ENCODE measurements at regions of chr4 and their contacts with region 1.

Region 1: DNA sequence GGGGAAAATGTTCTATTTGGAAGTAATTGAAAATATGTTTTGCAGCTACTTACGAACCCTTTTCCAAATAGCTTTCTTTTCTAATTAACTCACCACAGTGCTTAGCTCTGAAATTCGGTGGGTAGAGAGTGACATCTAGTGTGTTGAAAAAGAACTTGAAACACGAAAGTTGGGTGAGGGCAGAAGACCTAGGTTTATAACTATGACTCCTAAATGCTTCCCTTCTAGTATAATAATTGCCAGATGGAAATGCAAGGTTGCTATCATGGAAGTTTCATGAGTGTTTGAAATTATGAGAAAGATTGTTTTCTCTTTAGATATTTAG is 77.3 kb upstream of the NOCT start:
- DNase-seq: peak in 1 of 2 experiments; percentile 44
- H3K4me3 ChIP-seq: no peak overlapping the region
- H3K4me3 Mint-ChIP-seq: no peak overlapping the region
- H3K27ac Mint-ChIP-seq: peak overlapping the region; percentile 32
- H3K4me1 ChIP-seq: peaks cover 56% of the 10 kb centered on the region
- H3K4me1 Mint-ChIP-seq: peaks cover 37% of the 10 kb centered on the region
- H3K27me3 ChIP-seq: no peaks in the 10 kb centered on the region
- H3K27me3 Mint-ChIP-seq: no peaks in the 10 kb centered on the region
- CTCF ChIP-seq: peak in 1 of 2 experiments; percentile 50

Region 2: DNA sequence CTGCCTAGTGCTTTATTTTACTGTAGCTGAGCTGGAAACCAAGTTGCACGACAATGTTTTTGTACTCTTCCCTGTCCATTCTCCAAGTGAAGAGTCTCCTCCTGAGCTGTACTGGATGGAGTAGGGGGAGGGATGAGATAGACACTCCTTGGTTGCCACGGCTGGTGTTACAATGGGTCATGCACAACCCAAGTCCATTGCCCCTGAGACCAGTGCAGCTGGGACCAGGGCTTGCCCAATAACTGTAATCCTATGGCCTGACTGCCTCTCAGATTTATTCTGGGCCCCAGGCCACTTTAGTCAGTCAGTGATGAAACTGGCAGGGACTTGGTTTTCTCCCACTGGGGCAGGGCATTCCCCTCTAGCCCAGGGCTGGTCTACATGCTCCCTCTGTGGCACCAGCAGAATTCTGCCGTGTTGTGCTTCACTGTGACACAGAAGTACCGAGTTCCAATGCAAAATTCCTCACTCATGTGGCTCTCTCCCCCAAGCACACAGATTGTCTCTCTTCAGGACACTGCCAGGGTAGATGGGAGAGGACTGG is 1202.7 kb before region 1 on chr4:
- CTCF ChIA-PET with region 1: no interaction called
- POLR2A ChIA-PET with region 1: no interaction called
- intact Hi-C with region 1: loop called (anchors 1 kb)
- DNase-seq: no peak
- H3K4me3 ChIP-seq: no peak overlapping the region
- H3K4me3 Mint-ChIP-seq: no peak overlapping the region
- H3K27ac Mint-ChIP-seq: no peak overlapping the region
- H3K4me1 ChIP-seq: no peaks in the 10 kb centered on the region
- H3K4me1 Mint-ChIP-seq: peaks cover 6% of the 10 kb centered on the region
- H3K27me3 ChIP-seq: no peaks in the 10 kb centered on the region
- H3K27me3 Mint-ChIP-seq: no peaks in the 10 kb centered on the region
- CTCF ChIP-seq: no peak

Region 3: GRCh38 chr4:138035781-138036258 is 902.5 kb before region 1 on chr4:
- CTCF ChIA-PET with region 1: no interaction called
- POLR2A ChIA-PET with region 1: no interaction called
- intact Hi-C with region 1: loop called (anchors 1 kb)
- DNase-seq: peak in 1 of 2 experiments; percentile 56
- H3K4me3 ChIP-seq: no peak overlapping the region
- H3K4me3 Mint-ChIP-seq: no peak overlapping the region
- H3K27ac Mint-ChIP-seq: no peak overlapping the region
- H3K4me1 ChIP-seq: no peaks in the 10 kb centered on the region
- H3K4me1 Mint-ChIP-seq: peaks cover under 1% of the 10 kb centered on the region
- H3K27me3 ChIP-seq: no peaks in the 10 kb centered on the region
- H3K27me3 Mint-ChIP-seq: no peaks in the 10 kb centered on the region
- CTCF ChIP-seq: peak; percentile 58 to 67

Region 4: DNA sequence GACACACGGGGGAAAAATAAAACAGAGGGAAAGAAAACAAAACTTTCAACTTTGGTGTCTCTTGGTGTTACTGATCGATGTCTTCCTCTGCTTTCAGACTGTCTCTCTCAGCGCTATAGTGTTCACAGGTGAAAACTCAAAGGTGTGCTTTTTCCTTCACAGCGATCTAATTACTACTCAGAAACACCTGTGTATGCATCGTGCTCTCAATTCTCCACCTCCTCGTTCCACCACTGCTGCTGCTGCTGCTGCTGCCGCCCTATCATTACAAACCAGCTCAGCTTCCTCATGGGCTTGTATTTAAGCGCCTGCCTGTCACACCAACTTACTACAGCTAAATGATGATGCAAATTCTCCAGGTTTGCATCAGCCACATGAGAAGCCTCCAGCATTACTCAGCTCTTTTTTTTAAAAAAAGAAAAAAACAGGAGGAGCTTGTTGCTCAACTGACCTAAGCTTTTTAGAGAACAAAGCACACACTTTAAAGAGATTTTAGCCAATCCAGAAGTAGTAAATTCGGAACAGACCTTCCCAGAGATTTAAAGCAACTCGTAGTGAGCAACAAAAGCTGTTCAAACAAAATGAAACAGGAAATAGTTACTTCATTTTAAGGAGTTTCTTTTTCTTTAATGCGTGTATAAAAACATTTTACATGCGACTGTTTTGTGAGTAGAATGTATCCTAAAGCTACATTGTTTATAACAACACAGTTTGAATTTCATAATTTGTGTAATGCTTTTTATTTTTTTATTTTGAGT is 696.1 kb before region 1 on chr4 and contains the start of gene SLC7A11:
- CTCF ChIA-PET with region 1: no interaction called
- POLR2A ChIA-PET with region 1: no interaction called
- intact Hi-C with region 1: loop called (anchors 10 kb)
- DNase-seq: peak; percentile 88 to 90
- H3K4me3 ChIP-seq: peak within 1 kb of the TSS; percentile 44
- H3K4me3 Mint-ChIP-seq: peak within 1 kb of the TSS; percentile 82
- H3K27ac Mint-ChIP-seq: peak within 1 kb of the TSS; percentile 90
- H3K4me1 ChIP-seq: peaks cover 15% of the 10 kb centered on the region
- H3K4me1 Mint-ChIP-seq: no peaks in the 10 kb centered on the region
- H3K27me3 ChIP-seq: no peaks in the 10 kb centered on the region
- H3K27me3 Mint-ChIP-seq: no peaks in the 10 kb centered on the region
- CTCF ChIP-seq: no peak
- total RNA-seq, gene SLC7A11: 32.9 and 41.1 TPM in 2 replicates

Region 5: GRCh38 chr4:138680989-138681604 is 257.2 kb before region 1 on chr4:
- CTCF ChIA-PET with region 1: interaction called, 3 read pairs
- POLR2A ChIA-PET with region 1: no interaction called
- intact Hi-C with region 1: loop called (anchors 5 kb)
- DNase-seq: peak; percentile 63 to 79
- H3K4me3 ChIP-seq: no peak overlapping the region
- H3K4me3 Mint-ChIP-seq: no peak overlapping the region
- H3K27ac Mint-ChIP-seq: no peak overlapping the region
- H3K4me1 ChIP-seq: peaks cover 10% of the 10 kb centered on the region
- H3K4me1 Mint-ChIP-seq: peaks cover 11% of the 10 kb centered on the region
- H3K27me3 ChIP-seq: no peaks in the 10 kb centered on the region
- H3K27me3 Mint-ChIP-seq: no peaks in the 10 kb centered on the region
- CTCF ChIP-seq: peak; percentile 72 to 89

Region 6: GRCh38 chr4:138919094-138919936 is 19.0 kb before region 1 on chr4:
- CTCF ChIA-PET with region 1: no interaction called
- POLR2A ChIA-PET with region 1: no interaction called
- intact Hi-C with region 1: loop called (anchors 1 kb)
- DNase-seq: peak; percentile 72 to 78
- H3K4me3 ChIP-seq: no peak overlapping the region
- H3K4me3 Mint-ChIP-seq: peak overlapping the region; percentile 42
- H3K27ac Mint-ChIP-seq: no peak overlapping the region
- H3K4me1 ChIP-seq: no peaks in the 10 kb centered on the region
- H3K4me1 Mint-ChIP-seq: peaks cover 10% of the 10 kb centered on the region
- H3K27me3 ChIP-seq: no peaks in the 10 kb centered on the region
- H3K27me3 Mint-ChIP-seq: no peaks in the 10 kb centered on the region
- CTCF ChIP-seq: peak; percentile 65 to 77

Region 7: DNA sequence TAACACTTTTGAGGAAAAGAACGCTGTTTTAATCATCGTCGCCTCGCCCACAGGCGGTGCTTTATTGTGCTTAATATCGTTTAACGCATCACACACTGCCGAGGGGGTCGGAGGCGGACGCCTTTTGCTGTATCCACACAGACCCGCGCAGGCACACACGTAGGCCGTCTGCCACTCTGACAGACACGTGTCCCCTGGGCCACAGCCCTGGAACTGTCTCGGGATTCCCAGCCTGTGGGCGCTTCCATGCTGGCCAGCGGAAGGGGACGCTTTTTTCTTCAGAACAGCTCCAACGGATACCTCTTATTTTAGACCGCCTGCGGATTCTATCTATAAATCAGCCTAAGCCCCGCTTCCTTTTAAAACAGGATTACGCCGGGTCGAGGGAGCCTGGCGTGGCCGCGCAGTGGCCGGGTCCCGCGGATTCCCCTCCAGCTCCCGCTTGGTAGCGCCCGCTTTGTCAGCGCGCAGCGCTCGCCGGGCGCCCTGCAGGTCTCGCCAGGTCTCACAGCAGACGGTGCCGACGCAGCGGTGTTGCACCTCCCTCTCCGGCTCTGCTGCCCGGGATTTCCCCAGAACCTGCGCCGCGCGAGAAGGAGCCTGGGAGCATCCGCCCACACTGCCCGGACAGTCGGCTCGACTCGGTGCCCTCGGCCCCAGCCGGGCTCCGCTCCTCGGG is 77.1 kb after region 1 on chr4 and contains the start of gene NOCT:
- CTCF ChIA-PET with region 1: interaction called, 5 read pairs
- POLR2A ChIA-PET with region 1: no interaction called
- intact Hi-C with region 1: loop called (anchors 2 kb)
- DNase-seq: peak; percentile 91 to 92
- H3K4me3 ChIP-seq: peak within 1 kb of the TSS; percentile 76
- H3K4me3 Mint-ChIP-seq: peak within 1 kb of the TSS; percentile 72
- H3K27ac Mint-ChIP-seq: peak within 1 kb of the TSS; percentile 83
- H3K4me1 ChIP-seq: peaks cover 37% of the 10 kb centered on the region
- H3K4me1 Mint-ChIP-seq: peaks cover 35% of the 10 kb centered on the region
- H3K27me3 ChIP-seq: no peaks in the 10 kb centered on the region
- H3K27me3 Mint-ChIP-seq: no peaks in the 10 kb centered on the region
- CTCF ChIP-seq: no peak
- total RNA-seq, gene NOCT: 21.5 and 25.4 TPM in 2 replicates

Measured in Caco-2 (cell line).